ENCODE measurements at regions of chr12 and their contacts with region 1.

Region 1: GRCh38 chr12:103956516-103957027 is 9.1 kb upstream of the TDG start:
- H3K4me3 Mint-ChIP-seq: peak overlapping the region; percentile 85
- H3K27ac Mint-ChIP-seq: peak overlapping the region; percentile 89
- H3K4me1 Mint-ChIP-seq: peaks cover 42% of the 10 kb centered on the region
- H3K27me3 Mint-ChIP-seq: no peaks in the 10 kb centered on the region

Region 2: GRCh38 chr12:102939670-102940222 is 1016.8 kb before region 1 on chr12:
- intact Hi-C with region 1: no loop called
- H3K4me3 Mint-ChIP-seq: no peak overlapping the region
- H3K27ac Mint-ChIP-seq: no peak overlapping the region
- H3K4me1 Mint-ChIP-seq: no peaks in the 10 kb centered on the region
- H3K27me3 Mint-ChIP-seq: no peaks in the 10 kb centered on the region

Region 3: DNA sequence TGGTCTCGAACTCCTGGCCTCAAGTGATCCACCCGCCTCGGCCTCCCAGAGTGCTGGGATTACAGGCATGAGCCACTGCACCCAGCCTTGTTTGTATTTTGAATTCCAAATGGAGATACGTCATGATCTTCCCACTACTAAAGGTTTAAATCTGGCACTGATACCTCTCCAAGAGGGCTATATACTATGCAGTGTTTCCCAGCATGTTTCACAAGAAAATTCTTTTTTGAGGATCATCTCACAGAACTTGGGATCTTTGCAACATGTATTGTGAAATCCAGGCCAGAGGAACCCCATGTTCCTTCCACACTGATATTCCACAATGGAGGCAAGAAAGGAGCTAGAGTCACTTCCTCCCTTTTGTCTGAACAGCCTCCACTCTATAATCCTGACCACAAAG is 228.2 kb before region 1 on chr12:
- intact Hi-C with region 1: no loop called
- H3K4me3 Mint-ChIP-seq: no peak overlapping the region
- H3K27ac Mint-ChIP-seq: no peak overlapping the region
- H3K4me1 Mint-ChIP-seq: peaks cover 6% of the 10 kb centered on the region
- H3K27me3 Mint-ChIP-seq: peaks cover 2% of the 10 kb centered on the region

Region 4: DNA sequence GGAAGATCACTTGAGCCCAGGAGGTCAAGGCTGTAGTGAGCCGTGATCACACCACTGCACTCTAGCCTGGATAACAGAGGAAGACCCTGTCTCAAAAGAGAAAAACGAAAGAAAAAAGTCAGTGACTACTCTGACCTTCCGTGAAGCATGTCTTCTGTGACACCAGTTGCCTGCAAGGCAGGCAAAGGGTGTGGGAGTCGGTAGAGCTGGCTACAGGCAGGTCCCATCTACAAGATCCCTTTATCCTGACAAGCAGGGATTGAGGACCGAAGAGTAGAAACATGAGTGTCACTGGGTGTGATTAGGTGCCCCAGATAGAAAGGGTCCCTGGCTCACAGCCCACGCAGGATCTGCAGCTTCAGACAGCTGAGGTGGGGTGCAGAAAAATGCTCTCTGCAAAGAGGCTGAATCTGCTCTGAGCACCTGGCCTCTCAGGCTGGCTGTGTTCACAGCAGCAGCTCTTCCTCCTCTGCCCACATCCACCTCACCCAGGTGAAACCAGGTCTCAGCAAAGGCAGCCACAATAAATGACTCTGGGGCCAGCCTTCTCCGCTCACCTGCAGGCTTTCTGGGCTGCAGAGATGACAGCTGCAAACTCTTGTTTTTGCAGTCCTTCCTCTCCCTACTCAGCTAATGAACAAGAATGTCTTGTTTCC is 54.9 kb before region 1 on chr12:
- intact Hi-C with region 1: no loop called
- H3K4me3 Mint-ChIP-seq: no peak overlapping the region
- H3K27ac Mint-ChIP-seq: no peak overlapping the region
- H3K4me1 Mint-ChIP-seq: no peaks in the 10 kb centered on the region
- H3K27me3 Mint-ChIP-seq: peaks cover under 1% of the 10 kb centered on the region

Region 5: DNA sequence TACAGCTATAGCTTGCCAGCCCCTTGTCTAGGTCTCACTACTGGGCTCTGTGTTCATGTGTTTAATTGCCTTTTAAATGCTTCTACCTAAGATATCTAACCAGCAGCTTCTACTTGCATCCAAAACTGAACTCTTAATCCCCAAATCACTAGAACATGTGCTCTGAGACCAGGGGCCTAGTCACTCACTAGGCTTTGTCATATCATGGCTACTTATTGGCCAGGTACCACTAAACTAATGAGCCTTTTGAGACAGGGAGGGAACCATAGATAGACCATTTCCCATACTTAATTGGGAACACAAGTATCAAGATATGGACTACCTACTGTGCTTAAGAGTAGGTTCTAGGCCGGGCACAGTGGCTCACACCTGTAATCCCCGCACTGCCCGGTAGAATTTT is 19.9 kb before region 1 on chr12:
- intact Hi-C with region 1: no loop called
- H3K4me3 Mint-ChIP-seq: no peak overlapping the region
- H3K27ac Mint-ChIP-seq: no peak overlapping the region
- H3K4me1 Mint-ChIP-seq: peaks cover 37% of the 10 kb centered on the region
- H3K27me3 Mint-ChIP-seq: no peaks in the 10 kb centered on the region

Region 6: GRCh38 chr12:104064031-104064822 is 107.7 kb after region 1 on chr12 and contains the start of gene HCFC2:
- intact Hi-C with region 1: loop called (anchors 5 kb)
- H3K4me3 Mint-ChIP-seq: peak within 1 kb of the TSS; percentile 90
- H3K27ac Mint-ChIP-seq: peak within 1 kb of the TSS; percentile 89
- H3K4me1 Mint-ChIP-seq: peaks cover 14% of the 10 kb centered on the region
- H3K27me3 Mint-ChIP-seq: peaks cover 8% of the 10 kb centered on the region

Region 7: GRCh38 chr12:105235732-105236476 is 1279.3 kb after region 1 on chr12 and contains the start of gene APPL2:
- intact Hi-C with region 1: loop called (anchors 5 kb)
- H3K4me3 Mint-ChIP-seq: peak within 1 kb of the TSS; percentile 86
- H3K27ac Mint-ChIP-seq: peak within 1 kb of the TSS; percentile 93
- H3K4me1 Mint-ChIP-seq: peaks cover 50% of the 10 kb centered on the region
- H3K27me3 Mint-ChIP-seq: peaks cover 2% of the 10 kb centered on the region

Measured in dendritic cell treated with granulocyte-macrophage colony-stimulating factor and Interleukin-4, amounts not matched to agents 40 ng/mL and 50 ng/mL, for 4 days (primary cell).